CD8-positive, alpha-beta memory T cell (primary cell): ENCODE measurements at regions of chr2 and their contacts with region 1.

Region 1: GRCh38 chr2:227238238-227239237 is 74.1 kb downstream of the COL4A3 start:
- DNase-seq: peak; percentile 29 to 69 (median 36)
- H3K4me3 ChIP-seq: no peak overlapping the region
- H3K4me3 Mint-ChIP-seq: no peak overlapping the region
- H3K27ac ChIP-seq: no peak overlapping the region
- H3K27ac Mint-ChIP-seq: no peak overlapping the region
- H3K4me1 ChIP-seq: no peaks in the 10 kb centered on the region
- H3K4me1 Mint-ChIP-seq: no peaks in the 10 kb centered on the region
- H3K27me3 ChIP-seq: no peaks in the 10 kb centered on the region
- H3K27me3 Mint-ChIP-seq: peaks cover 8 to 29% of the 10 kb centered on the region in 2 donors

Region 2: GRCh38 chr2:226934546-226935201 is 303.9 kb before region 1 on chr2:
- CTCF ChIA-PET with region 1: no interaction called
- POLR2A ChIA-PET with region 1: no interaction called
- DNase-seq: no peak
- H3K4me3 ChIP-seq: no peak overlapping the region
- H3K4me3 Mint-ChIP-seq: no peak overlapping the region
- H3K27ac ChIP-seq: no peak overlapping the region
- H3K27ac Mint-ChIP-seq: peak overlapping the region in 1 of 8 donors; percentile 44
- H3K4me1 ChIP-seq: no peaks in the 10 kb centered on the region
- H3K4me1 Mint-ChIP-seq: peaks cover 0 to 8% (median 0%) of the 10 kb centered on the region in 3 donors
- H3K27me3 ChIP-seq: no peaks in the 10 kb centered on the region
- H3K27me3 Mint-ChIP-seq: no peaks in the 10 kb centered on the region

Region 3: DNA sequence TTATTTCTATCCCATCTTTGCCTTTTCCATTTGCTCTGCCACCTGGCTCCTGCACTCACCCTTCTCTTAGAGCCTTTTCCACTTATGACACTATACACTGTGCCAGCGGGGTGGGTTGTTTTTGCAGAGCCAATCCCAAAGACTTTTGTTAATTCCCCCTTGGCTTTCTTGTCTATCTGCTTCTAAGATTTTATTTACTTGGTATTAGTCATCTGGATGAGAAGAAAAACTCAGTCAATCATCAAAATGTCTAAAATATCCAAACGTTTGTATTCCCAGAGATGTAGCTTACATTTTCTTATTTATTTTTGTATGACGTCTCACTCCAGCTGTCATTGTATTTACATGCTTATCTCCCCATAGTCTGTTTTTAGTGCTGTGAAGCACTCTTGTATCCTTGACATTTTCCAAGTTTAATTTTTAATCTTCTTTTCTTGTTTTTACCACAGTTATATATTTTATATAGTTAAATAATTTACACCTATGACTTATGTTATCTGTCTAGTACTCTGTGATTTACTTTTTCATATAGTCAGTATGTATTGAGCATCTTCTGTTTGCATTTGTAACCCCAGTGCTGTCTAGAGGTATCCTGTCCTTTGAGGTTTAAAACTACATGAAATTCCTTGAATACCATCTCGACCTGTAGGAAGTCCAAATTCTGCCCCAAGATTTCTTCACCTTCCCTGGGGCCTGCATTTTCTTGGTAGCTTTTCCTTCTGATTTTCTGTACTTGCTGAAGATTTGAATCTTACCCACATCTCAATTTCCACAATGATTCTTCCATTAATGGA is 19.0 kb before region 1 on chr2:
- CTCF ChIA-PET with region 1: interaction called, 11 read pairs
- POLR2A ChIA-PET with region 1: no interaction called
- DNase-seq: no peak
- H3K4me3 ChIP-seq: no peak overlapping the region
- H3K4me3 Mint-ChIP-seq: no peak overlapping the region
- H3K27ac ChIP-seq: no peak overlapping the region
- H3K27ac Mint-ChIP-seq: peak overlapping the region in 1 of 8 donors; percentile 87
- H3K4me1 ChIP-seq: no peaks in the 10 kb centered on the region
- H3K4me1 Mint-ChIP-seq: no peaks in the 10 kb centered on the region
- H3K27me3 ChIP-seq: no peaks in the 10 kb centered on the region
- H3K27me3 Mint-ChIP-seq: peaks cover 0 to 15% of the 10 kb centered on the region in 2 donors

Region 4: GRCh38 chr2:227228061-227228667 is 10.4 kb before region 1 on chr2:
- CTCF ChIA-PET with region 1: interaction called, 16 read pairs
- POLR2A ChIA-PET with region 1: no interaction called
- DNase-seq: no peak
- H3K4me3 ChIP-seq: no peak overlapping the region
- H3K4me3 Mint-ChIP-seq: no peak overlapping the region
- H3K27ac ChIP-seq: no peak overlapping the region
- H3K27ac Mint-ChIP-seq: no peak overlapping the region
- H3K4me1 ChIP-seq: no peaks in the 10 kb centered on the region
- H3K4me1 Mint-ChIP-seq: no peaks in the 10 kb centered on the region
- H3K27me3 ChIP-seq: no peaks in the 10 kb centered on the region
- H3K27me3 Mint-ChIP-seq: peaks cover 4 to 34% of the 10 kb centered on the region in 2 donors

Region 5: GRCh38 chr2:227260041-227260440 is 21.5 kb after region 1 on chr2:
- CTCF ChIA-PET with region 1: no interaction called
- POLR2A ChIA-PET with region 1: no interaction called
- DNase-seq: no peak
- H3K4me3 ChIP-seq: no peak overlapping the region
- H3K4me3 Mint-ChIP-seq: no peak overlapping the region
- H3K27ac ChIP-seq: no peak overlapping the region
- H3K27ac Mint-ChIP-seq: no peak overlapping the region
- H3K4me1 ChIP-seq: no peaks in the 10 kb centered on the region
- H3K4me1 Mint-ChIP-seq: no peaks in the 10 kb centered on the region
- H3K27me3 ChIP-seq: no peaks in the 10 kb centered on the region
- H3K27me3 Mint-ChIP-seq: peaks cover 4% of the 10 kb centered on the region in 2 donors